Ascending aorta (tissue), 2 donors: ENCODE measurements at regions of chr3 and their contacts with region 1.

Region 1: GRCh38 chr3:8501371-8502131 is at the start of gene LMCD1:
- DNase-seq: peak; percentile 88 to 98
- H3K4me3 ChIP-seq: peak within 1 kb of the TSS; percentile 71 to 77
- H3K27ac ChIP-seq: peak within 1 kb of the TSS; percentile 83 to 91
- H3K4me1 ChIP-seq: peaks cover 0 to 13% of the 10 kb centered on the region in 2 donors
- H3K27me3 ChIP-seq: no peaks in the 10 kb centered on the region
- CTCF ChIP-seq: peak; percentile 26 to 30 (median 30)
- total RNA-seq, gene LMCD1: 634 TPM

Region 2: DNA sequence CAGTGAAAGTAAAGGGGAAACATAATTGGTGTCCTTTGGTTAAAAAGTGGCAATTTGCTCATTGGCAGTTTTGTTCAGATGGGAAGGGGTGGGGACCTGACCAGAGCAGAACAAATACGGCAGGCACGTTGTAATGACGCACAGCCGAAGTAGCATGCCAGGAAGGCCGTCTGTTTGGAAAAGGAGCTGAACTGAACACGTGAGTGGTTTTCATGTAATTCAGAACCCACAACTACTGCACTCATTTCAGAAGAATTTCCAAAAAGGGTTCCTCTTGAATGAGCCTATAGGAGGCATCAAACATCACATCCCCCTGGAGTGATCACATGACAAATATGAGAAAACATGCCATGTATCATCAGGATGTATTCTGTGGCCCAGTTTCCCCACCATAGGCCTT is 42.8 kb before region 1 on chr3:
- intact Hi-C with region 1: loop called (anchors 1 kb)
- DNase-seq: peak; percentile 77 to 96
- H3K4me3 ChIP-seq: no peak overlapping the region
- H3K27ac ChIP-seq: peak overlapping the region; percentile 93 to 97
- H3K4me1 ChIP-seq: peaks cover 0 to 54% of the 10 kb centered on the region in 2 donors
- H3K27me3 ChIP-seq: no peaks in the 10 kb centered on the region
- CTCF ChIP-seq: no peak

Region 3: DNA sequence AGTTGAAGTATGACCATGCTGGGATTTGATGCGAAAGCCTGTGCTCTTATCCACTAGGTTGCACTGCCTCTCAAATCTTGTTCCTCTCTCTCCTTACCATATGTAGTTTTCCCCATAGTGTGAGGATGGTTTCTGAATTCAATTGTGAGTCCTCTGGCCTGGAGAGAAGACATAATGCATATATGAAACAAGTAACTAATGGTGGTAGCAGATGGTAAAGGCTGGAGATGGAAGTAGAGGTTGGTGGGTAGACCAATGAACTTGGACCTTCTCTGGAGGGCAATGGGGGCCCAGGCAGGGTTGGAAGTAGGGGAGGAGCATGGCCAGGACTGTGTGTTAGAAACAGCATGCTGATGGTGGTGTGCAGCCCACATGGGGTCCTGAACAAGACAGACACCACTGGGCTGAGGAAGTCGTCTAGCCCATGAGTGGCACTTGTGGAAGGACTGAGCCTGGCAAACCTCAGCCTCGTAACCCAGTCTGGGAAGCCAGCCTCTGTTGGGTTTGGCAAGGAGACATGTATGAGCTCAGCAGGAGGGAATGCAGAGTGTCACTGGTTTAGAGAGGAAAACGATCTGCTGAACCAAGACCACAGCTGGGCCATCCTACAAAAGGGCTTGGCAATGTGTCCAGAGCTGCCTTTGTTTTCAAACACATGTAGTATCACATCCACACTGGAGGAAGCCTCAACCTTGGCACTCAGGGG is 18.4 kb before region 1 on chr3:
- intact Hi-C with region 1: loop called (anchors 2 kb)
- DNase-seq: peak; percentile 54 to 95
- H3K4me3 ChIP-seq: no peak overlapping the region
- H3K27ac ChIP-seq: peak overlapping the region; percentile 86 to 94
- H3K4me1 ChIP-seq: peaks cover 11 to 63% of the 10 kb centered on the region in 2 donors
- H3K27me3 ChIP-seq: no peaks in the 10 kb centered on the region
- CTCF ChIP-seq: no peak

Region 4: DNA sequence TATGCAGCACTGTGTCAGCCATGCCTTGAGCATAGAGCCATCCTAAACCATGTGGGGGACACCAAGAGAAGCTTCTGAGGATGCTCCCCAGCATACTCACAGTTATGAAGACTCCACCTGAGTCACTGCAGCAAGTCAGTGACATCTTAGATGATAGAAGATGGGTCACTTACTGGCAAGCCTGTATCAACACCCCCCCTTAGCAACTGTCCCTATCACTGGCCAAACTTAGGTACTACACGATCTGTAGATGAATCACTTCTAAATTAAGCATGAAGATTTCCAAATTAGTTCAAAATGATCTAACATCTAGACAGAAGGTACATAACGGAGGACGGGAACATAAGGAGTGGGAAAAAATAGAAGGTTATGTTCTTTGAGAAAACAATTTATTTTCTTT is 13.1 kb before region 1 on chr3:
- intact Hi-C with region 1: loop called (anchors 1 kb)
- DNase-seq: peak in 1 of 2 donors; percentile 77
- H3K4me3 ChIP-seq: no peak overlapping the region
- H3K27ac ChIP-seq: peak overlapping the region; percentile 86 to 94
- H3K4me1 ChIP-seq: peaks cover 12 to 64% of the 10 kb centered on the region in 2 donors
- H3K27me3 ChIP-seq: no peaks in the 10 kb centered on the region
- CTCF ChIP-seq: peak in 2 of 3 experiments; percentile 28 to 32

Region 5: DNA sequence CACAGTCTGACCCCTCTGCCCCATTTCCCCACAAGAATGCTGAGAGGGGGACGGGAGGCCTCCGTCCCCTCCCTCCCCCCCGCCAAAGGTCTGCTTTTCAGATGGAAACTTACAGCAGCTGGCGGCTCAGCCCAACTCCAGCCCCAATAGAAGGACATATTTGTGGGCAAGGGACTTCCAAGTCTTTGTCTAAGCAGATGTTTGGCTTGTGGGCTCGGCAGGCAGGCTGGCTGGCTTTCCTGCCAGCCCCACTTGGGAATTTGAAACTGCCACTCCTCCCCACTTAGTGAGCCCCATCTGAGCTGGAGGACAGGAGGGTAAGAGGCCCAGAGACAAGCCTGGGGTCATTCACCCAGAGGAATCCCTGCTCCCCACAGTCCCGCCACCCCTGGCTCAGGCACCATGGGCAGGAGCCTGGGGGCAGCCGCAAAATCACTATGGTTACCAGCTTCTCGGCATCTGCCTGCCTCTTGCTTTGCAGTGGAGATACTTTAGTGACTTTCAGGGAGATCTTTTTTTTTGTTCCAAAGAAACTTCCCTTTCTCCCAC is 53.6 kb after region 1 on chr3:
- intact Hi-C with region 1: loop called (anchors 5 kb)
- DNase-seq: peak in 1 of 2 donors; percentile 76
- H3K4me3 ChIP-seq: peak overlapping the region in 1 of 2 donors; percentile 24
- H3K27ac ChIP-seq: peak overlapping the region; percentile 79 to 84
- H3K4me1 ChIP-seq: peaks cover 51 to 88% of the 10 kb centered on the region in 2 donors
- H3K27me3 ChIP-seq: no peaks in the 10 kb centered on the region
- CTCF ChIP-seq: no peak